ENCODE measurements at regions of chrX and their contacts with region 1.

Region 1: DNA sequence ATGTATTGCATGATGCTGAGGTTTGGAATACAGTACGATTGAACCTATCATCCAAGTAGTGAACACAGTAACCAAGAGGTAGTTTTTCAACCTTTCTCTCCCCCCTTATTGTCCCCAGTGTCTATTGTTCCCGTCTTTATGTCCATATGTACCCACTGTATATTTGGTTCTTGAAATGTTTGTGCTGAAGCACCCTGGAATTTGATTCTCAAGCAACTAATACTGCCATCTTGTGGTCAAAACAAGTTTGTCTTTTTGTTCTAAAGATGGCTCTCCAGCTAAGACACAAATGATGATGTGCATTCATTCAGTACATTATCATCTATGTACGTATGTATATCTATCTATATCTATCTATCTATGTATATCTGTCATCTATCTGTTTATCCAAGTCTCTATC is 33.5 kb upstream of the DCX start:
- DNase-seq: no peak
- ATAC-seq: no peak
- H3K4me3 Mint-ChIP-seq: no peak overlapping the region
- H3K27ac Mint-ChIP-seq: no peak overlapping the region
- H3K4me1 Mint-ChIP-seq: no peaks in the 10 kb centered on the region
- H3K27me3 Mint-ChIP-seq: peaks cover 5% of the 10 kb centered on the region

Region 2: GRCh38 chrX:110853610-110854009 is 591.9 kb before region 1 on chrX:
- CTCF ChIA-PET with region 1: no interaction called
- POLR2A ChIA-PET with region 1: no interaction called
- intact Hi-C with region 1: loop called in 1 of 2 experiments (anchors 10 kb)
- DNase-seq: no peak
- ATAC-seq: no peak
- H3K4me3 Mint-ChIP-seq: no peak overlapping the region
- H3K27ac Mint-ChIP-seq: no peak overlapping the region
- H3K4me1 Mint-ChIP-seq: no peaks in the 10 kb centered on the region
- H3K27me3 Mint-ChIP-seq: peaks cover 3% of the 10 kb centered on the region

Region 3: GRCh38 chrX:110992611-110993010 is 452.9 kb before region 1 on chrX:
- CTCF ChIA-PET with region 1: no interaction called
- POLR2A ChIA-PET with region 1: no interaction called
- intact Hi-C with region 1: loop called (anchors 1 to 5 kb)
- DNase-seq: peak; percentile 35
- ATAC-seq: no peak
- H3K4me3 Mint-ChIP-seq: no peak overlapping the region
- H3K27ac Mint-ChIP-seq: no peak overlapping the region
- H3K4me1 Mint-ChIP-seq: no peaks in the 10 kb centered on the region
- H3K27me3 Mint-ChIP-seq: peaks cover 2% of the 10 kb centered on the region

Region 4: GRCh38 chrX:111123125-111123524 is 322.4 kb before region 1 on chrX:
- CTCF ChIA-PET with region 1: no interaction called
- POLR2A ChIA-PET with region 1: no interaction called
- intact Hi-C with region 1: no loop called
- DNase-seq: peak; percentile 7
- ATAC-seq: peak; percentile 60
- H3K4me3 Mint-ChIP-seq: peak overlapping the region; percentile 43
- H3K27ac Mint-ChIP-seq: peak overlapping the region; percentile 70
- H3K4me1 Mint-ChIP-seq: peaks cover 12% of the 10 kb centered on the region
- H3K27me3 Mint-ChIP-seq: peaks cover 2% of the 10 kb centered on the region

Region 5: DNA sequence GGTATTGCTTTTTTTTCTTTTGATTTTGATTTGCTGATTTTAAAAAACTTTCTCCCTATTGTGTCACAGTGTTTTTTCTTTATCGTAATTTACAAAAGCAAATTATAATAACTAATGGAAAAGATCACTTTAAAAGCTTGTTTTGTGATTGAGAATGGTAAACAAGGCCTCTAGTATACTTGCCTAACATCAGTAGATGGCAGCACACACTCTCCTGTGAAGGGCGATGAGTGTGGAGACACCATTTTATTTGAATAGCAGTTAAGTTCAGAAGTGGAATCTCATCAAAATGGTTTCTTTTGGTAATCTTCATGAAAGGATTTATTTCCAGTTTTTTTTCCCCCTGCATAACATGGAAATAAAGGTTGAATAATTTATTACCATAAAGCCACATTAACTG is 277.2 kb before region 1 on chrX:
- CTCF ChIA-PET with region 1: no interaction called
- POLR2A ChIA-PET with region 1: no interaction called
- intact Hi-C with region 1: loop called in 1 of 2 experiments (anchors 5 kb)
- DNase-seq: peak; percentile 4
- ATAC-seq: peak; percentile 36
- H3K4me3 Mint-ChIP-seq: no peak overlapping the region
- H3K27ac Mint-ChIP-seq: no peak overlapping the region
- H3K4me1 Mint-ChIP-seq: peaks cover 10% of the 10 kb centered on the region
- H3K27me3 Mint-ChIP-seq: no peaks in the 10 kb centered on the region

Region 6: GRCh38 chrX:111200327-111200726 is 245.2 kb before region 1 on chrX:
- CTCF ChIA-PET with region 1: no interaction called
- POLR2A ChIA-PET with region 1: no interaction called
- intact Hi-C with region 1: no loop called
- DNase-seq: no peak
- ATAC-seq: no peak
- H3K4me3 Mint-ChIP-seq: no peak overlapping the region
- H3K27ac Mint-ChIP-seq: no peak overlapping the region
- H3K4me1 Mint-ChIP-seq: no peaks in the 10 kb centered on the region
- H3K27me3 Mint-ChIP-seq: peaks cover 4% of the 10 kb centered on the region

Measured in activated CD4-positive, alpha-beta T cell treated with anti-CD3 and anti-CD28 coated beads for 36 hours (primary cell).